Activated CD8-positive, alpha-beta T cell treated with anti-CD3 and anti-CD28 coated beads for 36 hours (primary cell): ENCODE measurements at regions of chr10 and their contacts with region 1.

Region 1: DNA sequence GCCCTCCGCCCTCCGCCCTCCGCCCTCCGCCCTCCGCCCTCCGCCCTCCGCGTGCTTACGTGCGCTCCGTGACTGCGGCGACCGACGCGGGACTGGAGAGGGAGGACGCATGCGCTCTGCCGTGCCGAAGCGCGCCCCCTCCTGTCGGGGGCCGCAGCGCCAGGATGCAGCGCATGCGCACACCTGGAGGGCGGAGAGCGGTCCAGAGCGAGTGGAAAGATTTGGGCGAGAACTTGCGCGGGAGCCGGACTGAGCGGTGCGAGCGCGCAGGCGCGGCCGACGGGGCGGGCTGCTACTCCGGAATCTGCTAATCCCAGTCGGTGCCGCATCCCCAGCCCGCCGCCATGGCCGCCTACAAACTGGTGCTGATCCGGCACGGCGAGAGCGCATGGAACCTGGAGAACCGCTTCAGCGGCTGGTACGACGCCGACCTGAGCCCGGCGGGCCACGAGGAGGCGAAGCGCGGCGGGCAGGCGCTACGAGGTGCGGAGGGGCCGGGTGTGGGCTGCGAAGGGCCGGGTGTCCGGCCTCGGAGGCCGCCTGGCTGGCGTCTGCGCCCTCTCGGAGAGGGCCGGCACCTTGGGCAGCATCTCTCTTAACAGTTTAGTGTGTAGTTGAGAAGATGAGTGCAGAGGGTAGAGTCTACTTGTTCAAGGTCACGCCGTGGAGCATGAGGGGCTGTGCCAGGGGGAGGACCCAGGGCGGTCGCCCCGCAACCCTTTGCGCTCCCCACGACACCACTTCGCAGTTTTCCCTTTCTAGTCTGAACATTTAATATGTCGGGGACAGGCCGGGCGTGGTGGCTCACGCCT is at the start of gene PGAM1:
- DNase-seq: peak; percentile 93
- ATAC-seq: peak; percentile 73
- H3K4me3 Mint-ChIP-seq: peak within 1 kb of the TSS; percentile 96
- H3K27ac Mint-ChIP-seq: peak within 1 kb of the TSS; percentile 99
- H3K4me1 Mint-ChIP-seq: peaks cover 43% of the 10 kb centered on the region
- H3K27me3 Mint-ChIP-seq: peaks cover 2% of the 10 kb centered on the region
- CTCF ChIP-seq: peak; percentile 55
- total RNA-seq, gene PGAM1: 1,193 to 1,205 TPM

Region 2: DNA sequence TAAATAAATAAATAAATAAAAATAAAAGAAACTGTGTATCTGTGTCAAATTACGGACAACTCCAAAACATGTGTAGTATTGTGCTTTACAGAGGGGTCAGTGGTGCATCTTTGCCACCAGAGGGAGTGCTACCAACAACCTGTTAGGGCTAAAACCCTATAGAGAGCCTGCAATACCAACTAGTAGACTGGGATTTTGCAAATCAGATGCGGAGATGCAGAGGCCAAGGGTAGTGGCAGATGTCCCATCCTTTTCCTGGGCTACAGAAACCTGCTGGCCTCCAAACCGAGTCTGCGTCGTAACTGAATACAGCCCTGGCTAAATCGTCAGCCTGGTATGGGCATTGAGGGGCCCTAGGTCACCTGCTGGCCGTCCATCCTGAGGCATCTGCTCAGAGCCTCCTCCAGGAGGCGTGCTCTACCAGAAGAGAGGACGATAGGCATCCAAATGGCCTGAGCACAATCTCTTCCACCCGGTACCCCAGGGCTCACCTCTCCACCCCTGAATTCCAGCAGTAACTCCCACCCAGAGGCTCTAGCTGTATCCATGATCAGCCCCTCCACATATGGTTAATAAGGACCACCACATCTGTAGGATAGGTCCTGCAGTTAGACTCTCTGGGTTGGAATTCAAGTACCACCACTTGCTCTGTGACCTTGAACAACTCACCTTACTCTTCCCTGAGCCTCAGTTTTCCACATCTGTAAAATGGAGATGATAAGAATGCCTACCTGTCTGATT is 18.8 kb before region 1 on chr10:
- CTCF ChIA-PET with region 1: interaction called, 108 read pairs
- POLR2A ChIA-PET with region 1: interaction called, 79 read pairs
- intact Hi-C with region 1: loop called (anchors 2 kb)
- DNase-seq: peak; percentile 75
- ATAC-seq: peak; percentile 96
- H3K4me3 Mint-ChIP-seq: peak overlapping the region; percentile 31
- H3K27ac Mint-ChIP-seq: peak overlapping the region; percentile 62
- H3K4me1 Mint-ChIP-seq: peaks cover 10% of the 10 kb centered on the region
- H3K27me3 Mint-ChIP-seq: no peaks in the 10 kb centered on the region
- CTCF ChIP-seq: peak; percentile 97

Region 3: GRCh38 chr10:97412891-97413304 is 13.3 kb before region 1 on chr10:
- CTCF ChIA-PET with region 1: interaction called, 108 read pairs
- POLR2A ChIA-PET with region 1: interaction called, 79 read pairs
- intact Hi-C with region 1: loop called (anchors 1 kb)
- DNase-seq: peak; percentile 87
- ATAC-seq: peak; percentile 60
- H3K4me3 Mint-ChIP-seq: peak overlapping the region; percentile 41
- H3K27ac Mint-ChIP-seq: peak overlapping the region; percentile 88
- H3K4me1 Mint-ChIP-seq: peaks cover 47% of the 10 kb centered on the region
- H3K27me3 Mint-ChIP-seq: no peaks in the 10 kb centered on the region
- CTCF ChIP-seq: no peak

Region 4: DNA sequence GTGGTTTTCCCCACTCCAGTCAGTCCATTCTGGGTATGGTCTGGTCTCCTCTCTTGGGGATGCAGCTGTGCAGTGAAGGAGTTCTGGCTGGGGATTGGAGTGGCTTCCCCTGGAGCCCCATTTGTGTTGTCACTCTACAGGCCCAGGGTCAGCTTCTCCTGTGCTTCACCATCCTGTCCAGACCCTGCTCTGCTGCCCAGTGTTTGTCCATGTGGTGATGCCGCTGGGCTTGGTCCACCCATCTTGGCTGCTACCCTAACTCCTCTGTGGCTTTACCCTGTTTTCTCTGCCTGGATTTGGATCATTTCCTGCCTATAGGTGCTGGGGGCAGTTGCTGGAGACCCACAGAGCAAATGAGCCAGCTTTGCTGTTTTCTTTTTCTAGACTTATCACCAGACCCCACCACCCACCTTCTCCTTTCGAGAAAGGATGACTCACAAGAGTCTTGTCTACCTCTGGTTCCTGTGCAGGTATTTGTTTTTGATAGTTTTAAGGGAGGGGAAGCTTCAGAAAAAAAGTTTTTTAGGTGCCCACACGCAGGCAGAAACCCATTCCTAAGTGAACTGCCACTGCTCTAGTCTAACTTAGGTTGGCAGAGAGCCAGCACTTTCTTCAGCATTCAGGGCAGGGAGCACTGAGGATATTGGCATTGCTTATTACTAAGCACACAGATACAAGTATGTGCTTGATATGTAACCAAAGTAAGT is 28.3 kb after region 1 on chr10:
- CTCF ChIA-PET with region 1: interaction called, 3 read pairs
- POLR2A ChIA-PET with region 1: interaction called, 12 read pairs
- intact Hi-C with region 1: no loop called
- DNase-seq: peak; percentile 52
- ATAC-seq: peak; percentile 80
- H3K4me3 Mint-ChIP-seq: no peak overlapping the region
- H3K27ac Mint-ChIP-seq: peak overlapping the region; percentile 94
- H3K4me1 Mint-ChIP-seq: peaks cover 38% of the 10 kb centered on the region
- H3K27me3 Mint-ChIP-seq: no peaks in the 10 kb centered on the region
- CTCF ChIP-seq: no peak